HEK293 (cell line): ENCODE measurements at regions of chr12 and their contacts with region 1.

Region 1: GRCh38 chr12:49366652-49367380 is 446 bp upstream of the SPATS2 start:
- H3K4me3 ChIP-seq: peak overlapping the region; percentile 97
- H3K27ac ChIP-seq: peak overlapping the region; percentile 99
- H3K4me1 ChIP-seq: peaks cover 9% of the 10 kb centered on the region
- CTCF ChIP-seq: peak; percentile 90

Region 2: DNA sequence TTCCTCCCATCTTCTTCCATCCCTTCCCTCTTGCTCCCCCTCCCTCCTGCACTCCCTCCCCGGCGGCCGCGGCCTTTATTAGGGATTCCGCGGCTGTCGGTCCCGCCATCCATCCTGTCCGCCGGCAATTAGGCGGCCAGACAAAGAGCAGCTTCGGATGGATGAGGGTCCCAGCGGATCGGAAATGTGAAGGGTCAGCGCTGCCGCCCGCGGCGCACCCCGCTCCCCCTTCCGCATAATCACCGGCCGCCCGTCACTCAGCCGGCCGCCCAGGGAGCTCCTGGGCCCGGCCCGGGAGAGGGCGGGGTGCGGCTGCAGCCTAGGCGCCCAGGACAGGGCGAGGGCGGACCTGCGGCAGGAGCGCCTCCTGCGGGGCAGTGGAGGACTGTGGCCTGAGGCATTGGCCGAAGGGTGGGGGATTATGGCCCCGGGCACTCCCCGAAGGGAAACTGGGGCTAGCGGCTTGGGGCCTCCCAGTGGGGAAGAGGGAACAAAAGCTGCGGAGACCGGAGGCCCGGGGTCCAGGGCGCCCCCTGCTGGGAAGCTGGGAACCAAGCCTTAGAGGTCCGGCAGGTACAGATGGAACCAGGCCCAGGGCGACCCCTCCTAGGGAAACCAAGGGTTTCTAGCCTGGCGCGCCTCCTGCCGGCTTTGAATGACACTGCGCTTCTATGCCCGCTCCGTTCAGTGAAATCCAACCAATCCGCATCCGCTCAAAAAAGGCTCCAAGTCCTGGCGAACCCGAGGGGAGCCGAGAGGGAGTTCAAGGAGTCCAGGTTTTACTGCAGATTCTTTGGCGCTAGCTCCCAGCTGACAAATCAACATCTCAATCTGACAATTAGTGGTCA is 24.5 kb before region 1 on chr12:
- CTCF ChIA-PET with region 1: interaction called, 16 read pairs
- POLR2A ChIA-PET with region 1: interaction called, 24 read pairs
- H3K4me3 ChIP-seq: peak overlapping the region; percentile 20
- H3K27ac ChIP-seq: peak overlapping the region; percentile 21; the same call in 1 of the 2 replicates
- H3K4me1 ChIP-seq: peaks cover 22% of the 10 kb centered on the region
- CTCF ChIP-seq: peak; percentile 88

Region 3: DNA sequence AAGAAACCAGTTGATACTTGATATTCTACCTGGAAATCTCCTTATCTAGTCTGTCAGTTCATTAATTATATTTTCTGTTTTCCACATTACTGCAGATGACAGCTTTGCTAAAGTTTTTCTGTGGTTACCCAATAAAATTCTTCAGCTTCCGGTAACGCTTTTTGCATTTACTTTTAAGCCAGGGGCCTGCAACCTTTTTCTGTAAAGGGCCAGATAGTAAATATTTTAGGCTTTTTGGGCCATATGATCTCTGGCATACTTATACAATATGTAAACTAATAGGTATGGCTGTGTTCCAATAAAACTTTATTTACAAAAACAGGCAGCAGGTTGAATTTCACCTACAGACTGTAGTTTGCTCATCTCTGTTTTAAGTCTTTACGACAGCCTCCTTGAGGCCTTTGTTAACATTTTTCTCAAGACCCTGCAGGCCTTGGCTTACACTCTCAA is 48.7 kb after region 1 on chr12:
- CTCF ChIA-PET with region 1: interaction called, 5 read pairs
- POLR2A ChIA-PET with region 1: interaction called, 12 read pairs
- H3K4me3 ChIP-seq: no peak overlapping the region
- H3K27ac ChIP-seq: peak overlapping the region; percentile 49; the same call in 1 of the 2 replicates
- H3K4me1 ChIP-seq: peaks cover 12% of the 10 kb centered on the region
- CTCF ChIP-seq: no peak

Region 4: GRCh38 chr12:49482095-49483051 is 115.6 kb after region 1 on chr12:
- CTCF ChIA-PET with region 1: no interaction called
- POLR2A ChIA-PET with region 1: interaction called, 18 read pairs
- H3K4me3 ChIP-seq: no peak overlapping the region
- H3K27ac ChIP-seq: no peak overlapping the region
- H3K4me1 ChIP-seq: peaks cover 4% of the 10 kb centered on the region; the same call in 1 of the 2 replicates
- CTCF ChIP-seq: no peak

Region 5: GRCh38 chr12:49515266-49515665 is 148.4 kb after region 1 on chr12:
- CTCF ChIA-PET with region 1: interaction called, 517 read pairs
- POLR2A ChIA-PET with region 1: interaction called, 14 read pairs
- H3K4me3 ChIP-seq: no peak overlapping the region
- H3K27ac ChIP-seq: no peak overlapping the region
- H3K4me1 ChIP-seq: peaks cover 5% of the 10 kb centered on the region
- CTCF ChIP-seq: no peak